Activated CD4-positive, alpha-beta memory T cell treated with anti-CD3 and anti-CD28 coated beads for 36 hours (primary cell): ENCODE measurements at regions of chr5 and their contacts with region 1.

Region 1: GRCh38 chr5:157464519-157465171 is 4.6 kb downstream of the NIPAL4 start:
- DNase-seq: peak; percentile 86
- H3K4me3 Mint-ChIP-seq: peak overlapping the region; percentile 2
- H3K27ac Mint-ChIP-seq: peak overlapping the region; percentile 90
- H3K4me1 Mint-ChIP-seq: peaks cover 34% of the 10 kb centered on the region
- H3K27me3 Mint-ChIP-seq: peaks cover 15% of the 10 kb centered on the region

Region 2: DNA sequence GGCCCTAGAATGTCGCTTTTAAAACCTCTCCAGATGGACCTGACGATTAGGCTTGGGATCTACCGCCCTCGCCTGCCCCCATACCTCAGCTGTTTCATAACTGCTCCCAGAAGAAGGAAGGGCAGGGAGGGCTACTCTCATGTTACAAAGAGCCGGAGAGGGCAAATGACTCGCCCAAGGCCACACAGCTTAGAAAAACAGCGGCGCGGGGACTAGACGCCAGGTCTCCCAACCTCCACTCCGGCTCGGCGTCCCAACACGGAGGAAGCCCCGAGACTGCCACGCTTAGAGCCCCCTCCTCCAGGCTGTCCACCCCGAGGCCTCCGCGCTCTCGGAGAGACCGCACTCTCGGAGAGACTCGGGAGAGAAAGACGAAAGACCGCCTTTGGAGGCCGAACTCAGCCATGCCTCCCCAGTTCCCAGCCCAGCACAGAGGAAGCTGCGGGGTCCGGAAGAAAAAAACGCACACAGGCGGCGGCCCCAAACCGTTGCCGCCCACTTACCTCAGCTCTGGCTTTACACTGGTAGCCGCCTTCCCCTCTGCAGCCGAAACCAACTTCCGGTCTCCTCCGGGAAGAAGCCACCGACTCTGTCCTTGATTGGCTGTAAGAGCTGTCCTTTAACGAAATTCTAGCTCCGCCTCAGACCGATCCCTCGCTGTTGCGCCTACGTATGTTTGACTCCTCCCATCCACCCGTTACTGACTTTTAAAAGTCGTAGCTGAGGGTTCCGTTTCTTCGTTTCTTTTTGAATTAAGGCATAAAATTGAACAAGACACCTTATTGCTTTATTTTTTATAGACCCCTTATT is 322.1 kb before region 1 on chr5 and contains the start of gene MED7:
- CTCF ChIA-PET with region 1: no interaction called
- POLR2A ChIA-PET with region 1: interaction called, 3 read pairs
- intact Hi-C with region 1: loop called (anchors 2 kb)
- DNase-seq: peak; percentile 96
- H3K4me3 Mint-ChIP-seq: peak within 1 kb of the TSS; percentile 96
- H3K27ac Mint-ChIP-seq: peak within 1 kb of the TSS; percentile 99
- H3K4me1 Mint-ChIP-seq: peaks cover 49% of the 10 kb centered on the region
- H3K27me3 Mint-ChIP-seq: no peaks in the 10 kb centered on the region
- total RNA-seq, gene MED7: 17.2 to 19.2 TPM

Region 3: DNA sequence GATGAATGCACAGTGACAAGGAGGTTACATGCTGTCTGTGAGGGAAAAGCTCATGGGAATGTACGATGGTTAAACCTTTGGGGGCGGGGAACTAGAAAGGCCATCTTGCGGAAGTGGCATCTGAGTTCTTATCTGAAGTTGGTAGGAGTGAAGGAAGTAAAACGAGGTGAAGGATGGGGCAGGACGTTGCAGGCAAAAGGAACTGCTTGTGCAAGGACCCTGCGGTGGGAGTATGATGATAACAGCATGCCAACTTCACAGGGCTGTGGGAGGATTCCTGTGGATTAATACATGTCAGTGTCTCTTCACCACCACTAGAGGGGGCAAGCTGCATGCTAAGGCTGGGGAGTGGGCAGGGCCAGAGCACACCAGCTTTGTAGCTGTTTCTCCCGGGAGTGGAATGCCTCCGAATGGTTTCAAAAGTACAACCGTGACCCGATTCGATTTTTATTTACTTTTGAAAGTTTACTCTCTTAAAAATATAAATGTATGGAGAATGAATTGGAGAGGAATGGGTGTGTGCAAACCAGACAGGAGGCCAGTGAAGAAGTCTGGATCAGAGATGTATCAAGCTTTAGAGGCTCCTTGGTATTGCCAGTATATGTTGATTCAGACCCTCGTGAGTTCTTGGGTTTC is 136.2 kb before region 1 on chr5:
- CTCF ChIA-PET with region 1: interaction called, 83 read pairs
- POLR2A ChIA-PET with region 1: no interaction called
- intact Hi-C with region 1: no loop called
- DNase-seq: peak; percentile 71
- H3K4me3 Mint-ChIP-seq: no peak overlapping the region
- H3K27ac Mint-ChIP-seq: peak overlapping the region; percentile 23
- H3K4me1 Mint-ChIP-seq: peaks cover 40% of the 10 kb centered on the region
- H3K27me3 Mint-ChIP-seq: no peaks in the 10 kb centered on the region

Region 4: GRCh38 chr5:157390551-157391297 is 73.9 kb before region 1 on chr5:
- CTCF ChIA-PET with region 1: no interaction called
- POLR2A ChIA-PET with region 1: interaction called, 3 read pairs
- intact Hi-C with region 1: loop called (anchors 1 kb)
- DNase-seq: peak; percentile 91
- H3K4me3 Mint-ChIP-seq: peak overlapping the region; percentile 49
- H3K27ac Mint-ChIP-seq: peak overlapping the region; percentile 98
- H3K4me1 Mint-ChIP-seq: peaks cover 39% of the 10 kb centered on the region
- H3K27me3 Mint-ChIP-seq: no peaks in the 10 kb centered on the region

Region 5: DNA sequence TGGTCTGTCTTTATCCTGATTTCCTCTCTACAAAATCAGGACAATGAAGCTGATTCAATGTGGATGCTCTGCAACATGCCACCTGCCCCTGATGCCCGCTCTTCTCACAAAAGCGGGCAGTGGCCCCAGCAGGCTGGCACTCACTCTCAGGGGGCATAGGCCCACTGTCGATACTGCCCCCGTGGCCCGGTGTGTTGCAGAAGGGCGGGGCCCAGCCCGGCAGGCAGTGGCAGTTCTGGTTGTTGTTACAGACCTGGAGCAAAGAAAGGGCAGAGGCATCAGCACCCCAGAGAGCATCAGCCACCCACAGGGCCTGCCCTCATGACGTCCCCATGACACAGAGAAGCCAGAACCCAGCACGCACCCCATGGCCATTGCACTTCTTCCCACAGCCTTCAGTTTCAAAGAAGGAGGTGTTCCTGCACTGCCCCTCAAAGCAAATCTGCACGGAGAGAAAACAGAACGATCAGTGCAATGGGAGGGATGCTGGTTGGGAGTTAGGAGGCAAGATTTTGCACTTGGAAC is 26.9 kb after region 1 on chr5:
- CTCF ChIA-PET with region 1: no interaction called
- POLR2A ChIA-PET with region 1: no interaction called
- intact Hi-C with region 1: no loop called
- DNase-seq: no peak
- H3K4me3 Mint-ChIP-seq: no peak overlapping the region
- H3K27ac Mint-ChIP-seq: no peak overlapping the region
- H3K4me1 Mint-ChIP-seq: peaks cover 19% of the 10 kb centered on the region
- H3K27me3 Mint-ChIP-seq: no peaks in the 10 kb centered on the region

Region 6: GRCh38 chr5:157540707-157541446 is 76.2 kb after region 1 on chr5:
- CTCF ChIA-PET with region 1: no interaction called
- POLR2A ChIA-PET with region 1: interaction called, 4 read pairs
- intact Hi-C with region 1: loop called (anchors 1 kb)
- DNase-seq: peak; percentile 74
- H3K4me3 Mint-ChIP-seq: peak overlapping the region; percentile 65
- H3K27ac Mint-ChIP-seq: peak overlapping the region; percentile 98
- H3K4me1 Mint-ChIP-seq: peaks cover 87% of the 10 kb centered on the region
- H3K27me3 Mint-ChIP-seq: no peaks in the 10 kb centered on the region

Region 7: DNA sequence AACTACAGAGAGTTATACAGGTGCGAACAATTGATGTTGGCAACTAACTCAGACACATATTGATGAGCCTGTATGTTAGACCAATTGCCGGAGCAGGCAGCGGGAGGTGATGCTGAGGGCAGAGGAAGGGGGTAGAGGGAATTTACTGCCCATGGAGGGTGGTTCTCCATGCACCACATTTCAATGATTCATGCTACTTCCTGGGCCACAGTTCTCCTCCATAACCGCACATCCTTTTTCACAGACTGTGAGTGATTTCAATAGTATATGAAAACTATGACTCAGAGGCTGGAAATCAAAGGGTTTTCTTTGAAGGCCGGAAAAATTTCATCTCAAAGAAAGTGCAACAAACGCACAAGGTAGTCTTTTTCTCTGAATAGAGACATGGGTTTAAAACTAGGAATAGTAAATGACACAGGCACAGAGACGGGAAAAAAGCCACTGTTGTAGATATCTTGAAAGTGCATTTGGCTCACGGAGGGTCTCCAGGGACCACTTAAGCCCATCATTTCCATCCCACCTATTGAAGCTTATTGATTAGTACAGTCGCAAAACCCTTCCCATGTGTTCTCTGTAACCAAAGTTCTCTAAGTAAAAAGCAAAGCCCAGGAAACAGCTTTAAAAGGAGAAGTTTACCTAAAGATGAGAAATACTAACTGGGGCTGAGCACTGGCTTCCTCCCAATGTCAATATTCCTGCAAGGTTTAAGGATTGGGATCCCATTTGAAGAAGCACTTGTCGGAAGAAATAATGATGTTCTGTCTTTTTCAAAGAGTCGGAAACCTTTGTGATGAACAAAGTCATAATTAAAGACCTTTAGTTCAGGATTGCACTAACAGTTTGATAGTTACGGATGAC is 138.9 kb after region 1 on chr5:
- CTCF ChIA-PET with region 1: no interaction called
- POLR2A ChIA-PET with region 1: no interaction called
- intact Hi-C with region 1: loop called (anchors 2 kb)
- DNase-seq: peak; percentile 83
- H3K4me3 Mint-ChIP-seq: peak overlapping the region; percentile 18
- H3K27ac Mint-ChIP-seq: peak overlapping the region; percentile 90
- H3K4me1 Mint-ChIP-seq: peaks cover 93% of the 10 kb centered on the region
- H3K27me3 Mint-ChIP-seq: no peaks in the 10 kb centered on the region

Region 8: DNA sequence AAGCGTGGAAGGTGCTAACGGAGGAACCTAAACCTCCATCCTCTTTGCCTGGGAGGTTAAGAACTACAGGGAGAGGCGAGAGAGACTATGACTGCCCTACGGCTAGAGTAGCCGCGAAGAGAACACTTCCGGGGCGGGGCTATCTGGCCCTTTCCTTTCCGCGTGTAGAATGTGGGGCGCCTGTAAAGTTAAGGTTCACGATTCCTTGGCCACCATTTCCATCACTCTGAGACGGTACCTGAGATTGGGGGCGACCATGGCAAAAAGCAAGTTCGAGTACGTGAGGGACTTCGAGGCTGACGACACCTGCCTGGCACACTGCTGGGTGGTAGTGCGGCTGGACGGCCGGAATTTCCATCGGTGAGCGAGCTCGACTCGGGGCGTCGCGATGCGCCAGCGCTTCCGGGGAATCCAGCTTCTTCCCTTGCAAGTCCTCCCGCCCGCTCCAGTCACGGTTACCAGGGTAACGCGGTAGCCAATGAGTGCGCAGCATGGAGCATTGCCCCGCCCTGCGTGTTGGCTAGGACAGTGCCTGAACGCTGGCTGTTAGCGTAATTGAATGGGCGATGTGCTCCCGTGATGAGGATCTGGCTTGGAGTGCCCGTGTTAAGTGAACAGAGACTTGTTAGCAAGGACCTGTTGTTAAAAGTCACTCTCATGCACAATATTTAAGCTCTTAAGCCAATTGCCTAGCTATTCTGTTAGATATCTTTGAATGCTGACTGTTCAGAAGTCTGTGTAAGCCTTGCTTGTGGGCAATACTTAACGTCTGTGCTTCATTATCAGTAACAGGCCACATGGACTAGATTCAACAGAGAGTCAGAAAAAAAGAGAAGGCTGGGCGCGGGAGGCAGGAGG is 266.9 kb after region 1 on chr5 and contains the start of gene THG1L:
- CTCF ChIA-PET with region 1: no interaction called
- POLR2A ChIA-PET with region 1: no interaction called
- intact Hi-C with region 1: loop called (anchors 1 kb)
- DNase-seq: peak; percentile 100
- H3K4me3 Mint-ChIP-seq: peak within 1 kb of the TSS; percentile 95
- H3K27ac Mint-ChIP-seq: peak within 1 kb of the TSS; percentile 97
- H3K4me1 Mint-ChIP-seq: peaks cover 33% of the 10 kb centered on the region
- H3K27me3 Mint-ChIP-seq: no peaks in the 10 kb centered on the region
- total RNA-seq, gene THG1L: 28.6 to 33.5 TPM